Gastrocnemius medialis (tissue), 4 donors: ENCODE measurements at regions of chr15 and their contacts with region 1.

Region 1: DNA sequence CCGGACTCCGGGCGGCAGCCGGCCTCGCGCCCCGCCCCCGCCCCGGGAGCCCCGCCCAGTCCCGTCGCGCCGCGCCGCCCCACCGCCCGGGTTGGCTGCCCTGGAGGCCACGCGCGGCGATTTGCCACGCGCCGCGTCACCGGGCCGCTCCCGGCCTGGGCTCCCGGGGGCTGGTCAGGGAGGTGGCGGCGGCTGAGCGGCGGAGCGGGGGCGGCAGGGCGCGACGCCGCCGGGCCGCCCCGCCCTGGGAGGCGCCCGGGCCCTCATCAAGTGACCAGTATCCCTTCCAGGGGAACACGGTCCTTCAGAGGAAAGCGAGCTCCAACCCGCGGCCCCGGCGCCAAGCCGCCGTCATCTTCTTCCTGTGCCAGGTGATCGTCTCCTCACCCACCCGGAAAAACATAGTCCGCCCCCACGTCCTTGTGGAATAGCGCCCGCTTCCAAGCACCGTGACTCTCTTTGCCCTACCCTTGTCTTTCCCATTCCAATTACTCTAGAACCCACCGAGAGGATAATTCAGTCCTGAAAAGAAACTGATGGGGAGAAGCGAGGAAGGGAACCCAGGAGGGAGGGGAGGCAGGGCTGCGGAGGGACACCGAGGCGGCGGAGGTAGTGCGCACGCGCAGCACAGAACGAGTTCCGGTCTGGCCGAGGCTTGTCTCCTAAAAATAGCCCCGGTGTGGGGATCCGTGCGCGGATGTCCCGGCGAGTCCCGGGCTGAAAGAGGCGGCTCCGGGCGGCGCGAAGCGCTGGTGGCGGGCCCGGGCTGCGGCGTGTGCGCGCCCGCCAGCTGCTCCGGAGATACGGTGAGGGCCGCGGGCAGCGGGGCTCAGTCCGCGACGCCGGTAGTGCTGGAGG is at the start of gene MEF2A:
- DNase-seq: peak; percentile 93 to 94
- ATAC-seq: peak; percentile 78 to 83
- H3K4me3 ChIP-seq: peak within 1 kb of the TSS; percentile 78 to 86 (median 80)
- H3K27ac ChIP-seq: peak within 1 kb of the TSS; percentile 98 to 100 (median 98)
- H3K4me1 ChIP-seq: peaks cover 30 to 32% of the 10 kb centered on the region in 2 donors
- H3K27me3 ChIP-seq: no peaks in the 10 kb centered on the region
- CTCF ChIP-seq: peak in 1 of 5 experiments; percentile 28
- POLR2A ChIP-seq: peak; percentile 93
- total RNA-seq, gene MEF2A: 66.9 to 128 (median 107) TPM

Region 2: GRCh38 chr15:99409097-99409473 is 156.4 kb before region 1 on chr15:
- in situ Hi-C with region 1: no loop called
- intact Hi-C with region 1: loop called (anchors 1 kb)
- DNase-seq: peak; percentile 54 to 67
- ATAC-seq: peak; percentile 74 to 91
- H3K4me3 ChIP-seq: no peak overlapping the region
- H3K27ac ChIP-seq: peak overlapping the region in 3 of 4 donors; percentile 4 to 37 (median 32)
- H3K4me1 ChIP-seq: peaks cover 13 to 15% of the 10 kb centered on the region in 2 donors
- H3K27me3 ChIP-seq: no peaks in the 10 kb centered on the region
- CTCF ChIP-seq: peak; percentile 36 to 76 (median 60)
- POLR2A ChIP-seq: no peak

Region 3: DNA sequence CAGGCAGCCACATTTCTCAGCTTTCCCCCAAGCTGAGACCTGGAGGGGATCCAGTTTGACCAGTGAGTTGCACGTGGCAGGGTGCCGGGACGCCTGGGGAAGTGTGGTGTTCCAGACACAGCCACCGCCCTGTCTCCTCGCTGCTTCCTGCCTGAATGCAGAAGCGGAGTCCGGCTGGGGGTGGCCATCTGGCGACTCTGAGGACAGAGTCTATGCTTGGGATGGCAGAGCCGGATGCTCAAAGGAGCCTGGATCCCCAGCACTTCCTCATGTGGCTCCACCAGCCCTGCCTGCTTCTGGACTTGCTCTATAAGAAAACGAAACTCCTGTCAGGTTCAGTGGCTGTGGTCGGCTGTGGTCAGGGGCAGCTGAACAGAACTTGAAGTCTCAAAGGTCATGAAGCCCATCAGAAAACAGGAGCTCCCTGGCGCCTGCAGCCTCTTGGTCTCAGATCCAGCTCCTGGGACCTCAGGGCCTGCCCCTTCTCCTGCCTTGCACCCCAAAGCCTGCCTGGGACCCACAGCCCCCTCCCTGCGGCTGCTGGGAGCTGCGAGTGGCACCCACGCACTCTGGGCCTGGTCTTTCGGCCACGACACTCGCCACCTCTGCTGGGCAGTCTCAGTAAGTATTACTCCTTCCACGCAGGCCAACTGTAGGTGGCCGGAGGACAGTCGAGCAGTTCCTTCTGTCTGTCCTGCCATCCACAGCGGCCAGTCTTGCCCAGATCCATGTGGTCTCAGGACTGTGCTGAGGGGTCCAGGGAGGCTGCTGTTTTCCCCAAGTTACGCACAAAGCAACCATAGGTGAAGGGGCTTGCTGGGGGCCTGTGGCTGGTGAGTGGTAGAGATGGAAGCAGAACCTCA is 112.5 kb before region 1 on chr15:
- in situ Hi-C with region 1: no loop called
- intact Hi-C with region 1: loop called (anchors 5 kb)
- DNase-seq: peak; percentile 61 to 74
- ATAC-seq: peak in 1 of 2 donors; percentile 14
- H3K4me3 ChIP-seq: peak overlapping the region in 2 of 4 donors; percentile 14 to 17
- H3K27ac ChIP-seq: peak overlapping the region; percentile 72 to 90 (median 87)
- H3K4me1 ChIP-seq: peaks cover 41 to 47% of the 10 kb centered on the region in 2 donors
- H3K27me3 ChIP-seq: no peaks in the 10 kb centered on the region
- CTCF ChIP-seq: no peak
- POLR2A ChIP-seq: no peak

Region 4: GRCh38 chr15:99473981-99474906 is 91.3 kb before region 1 on chr15:
- in situ Hi-C with region 1: no loop called
- intact Hi-C with region 1: loop called (anchors 2 kb)
- DNase-seq: peak; percentile 85 to 93
- ATAC-seq: peak; percentile 91 to 93
- H3K4me3 ChIP-seq: peak overlapping the region in 3 of 4 donors; percentile 6 to 37 (median 9)
- H3K27ac ChIP-seq: peak overlapping the region; percentile 86 to 93 (median 90)
- H3K4me1 ChIP-seq: peaks cover 34 to 40% of the 10 kb centered on the region in 2 donors
- H3K27me3 ChIP-seq: no peaks in the 10 kb centered on the region
- CTCF ChIP-seq: no peak
- POLR2A ChIP-seq: peak; percentile 12 to 23

Region 5: GRCh38 chr15:99507504-99508310 is 57.8 kb before region 1 on chr15:
- in situ Hi-C with region 1: no loop called
- intact Hi-C with region 1: loop called (anchors 1 kb)
- DNase-seq: peak; percentile 90 to 97
- ATAC-seq: peak; percentile 82 to 86
- H3K4me3 ChIP-seq: peak overlapping the region; percentile 31 to 48 (median 34)
- H3K27ac ChIP-seq: peak overlapping the region; percentile 91 to 94 (median 92)
- H3K4me1 ChIP-seq: peaks cover 61 to 70% of the 10 kb centered on the region in 2 donors
- H3K27me3 ChIP-seq: no peaks in the 10 kb centered on the region
- CTCF ChIP-seq: peak in 1 of 5 experiments; percentile 19
- POLR2A ChIP-seq: peak in 1 of 2 donors; percentile 60

Region 6: GRCh38 chr15:99733268-99734039 is 167.9 kb after region 1 on chr15 and contains the start of gene LYSMD4:
- in situ Hi-C with region 1: no loop called
- intact Hi-C with region 1: loop called (anchors 5 kb)
- DNase-seq: peak; percentile 97 to 98
- ATAC-seq: peak; percentile 87 to 91
- H3K4me3 ChIP-seq: peak within 1 kb of the TSS; percentile 76 to 98 (median 84)
- H3K27ac ChIP-seq: peak within 1 kb of the TSS; percentile 85 to 94 (median 90)
- H3K4me1 ChIP-seq: peaks cover 27 to 33% of the 10 kb centered on the region in 2 donors
- H3K27me3 ChIP-seq: no peaks in the 10 kb centered on the region
- CTCF ChIP-seq: peak in 1 of 5 experiments; percentile 6
- POLR2A ChIP-seq: peak; percentile 90 to 94
- total RNA-seq, gene LYSMD4: 5.1 to 15.8 (median 11.9) TPM

Region 7: DNA sequence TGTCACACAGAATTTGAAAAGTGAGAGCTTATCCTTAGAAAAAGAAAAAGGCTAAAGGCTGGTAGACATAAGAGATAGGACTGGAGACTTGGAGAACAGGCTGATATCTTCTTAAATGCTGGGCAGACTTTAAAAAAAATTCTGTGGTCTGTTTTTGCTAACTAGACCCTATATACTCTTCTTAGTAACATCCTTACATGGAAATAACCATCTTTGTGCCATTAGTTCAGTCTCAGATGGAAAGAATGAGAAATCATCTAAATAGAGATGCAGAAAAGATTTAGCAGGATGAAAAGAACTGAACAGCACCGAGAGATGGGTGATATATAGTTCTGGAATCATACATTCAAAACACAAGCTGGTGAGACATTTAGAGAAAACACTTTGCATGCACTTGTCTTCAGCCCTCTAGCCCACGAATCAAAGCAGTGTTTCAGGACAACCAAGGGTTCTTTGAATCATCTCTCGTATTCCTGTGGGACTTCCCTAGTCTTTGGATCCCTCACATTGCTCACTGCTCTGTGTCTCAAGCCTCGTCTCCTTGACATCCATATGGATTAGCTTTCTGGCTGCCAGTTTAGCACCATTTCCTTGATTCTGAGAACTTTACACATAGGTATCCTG is 260.7 kb after region 1 on chr15:
- in situ Hi-C with region 1: no loop called
- intact Hi-C with region 1: no loop called
- DNase-seq: no peak
- ATAC-seq: no peak
- H3K4me3 ChIP-seq: no peak overlapping the region
- H3K27ac ChIP-seq: no peak overlapping the region
- H3K4me1 ChIP-seq: no peaks in the 10 kb centered on the region
- H3K27me3 ChIP-seq: no peaks in the 10 kb centered on the region
- CTCF ChIP-seq: no peak
- POLR2A ChIP-seq: no peak